ENCODE measurements at regions of chr5 and their contacts with region 1.

Region 1: GRCh38 chr5:39217365-39218281 is 1.7 kb downstream of the FYB1 start:
- DNase-seq: peak; percentile 73
- H3K4me3 Mint-ChIP-seq: peak overlapping the region; percentile 46
- H3K27ac Mint-ChIP-seq: peak overlapping the region; percentile 11
- H3K4me1 Mint-ChIP-seq: peaks cover 37% of the 10 kb centered on the region
- H3K27me3 Mint-ChIP-seq: no peaks in the 10 kb centered on the region
- CTCF ChIP-seq: peak; percentile 94

Region 2: GRCh38 chr5:39063037-39063436 is 154.6 kb before region 1 on chr5:
- CTCF ChIA-PET with region 1: no interaction called
- intact Hi-C with region 1: no loop called
- DNase-seq: no peak
- H3K4me3 Mint-ChIP-seq: no peak overlapping the region
- H3K27ac Mint-ChIP-seq: no peak overlapping the region
- H3K4me1 Mint-ChIP-seq: no peaks in the 10 kb centered on the region
- H3K27me3 Mint-ChIP-seq: no peaks in the 10 kb centered on the region
- CTCF ChIP-seq: no peak

Region 3: DNA sequence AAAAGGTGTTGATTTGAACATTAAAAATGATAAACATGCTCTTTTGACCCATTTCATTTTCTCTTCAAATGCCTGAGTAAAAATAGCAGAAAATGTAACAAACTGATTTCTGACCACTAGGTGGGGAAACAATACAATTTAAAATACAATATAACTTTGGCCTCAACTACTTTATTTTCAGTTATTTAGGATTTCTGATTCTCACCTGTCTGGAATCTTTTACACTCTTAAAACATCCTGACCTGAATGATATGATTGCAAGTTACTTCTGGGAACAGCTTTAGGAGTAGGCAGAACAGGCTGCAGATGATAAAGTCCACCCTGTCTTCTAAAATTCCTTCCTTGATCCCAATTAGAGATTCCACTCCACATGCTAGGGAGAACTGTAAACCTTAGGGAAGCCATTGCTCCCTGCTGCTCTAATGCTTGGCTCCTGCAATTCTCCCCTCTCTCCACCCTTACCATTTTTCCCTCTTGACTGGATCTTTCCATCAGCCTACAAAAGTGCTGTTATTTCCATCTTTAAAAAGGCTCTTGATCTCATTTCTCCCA is 68.6 kb before region 1 on chr5:
- CTCF ChIA-PET with region 1: no interaction called
- intact Hi-C with region 1: loop called (anchors 1 kb)
- DNase-seq: no peak
- H3K4me3 Mint-ChIP-seq: no peak overlapping the region
- H3K27ac Mint-ChIP-seq: peak overlapping the region; percentile 76
- H3K4me1 Mint-ChIP-seq: peaks cover 12% of the 10 kb centered on the region
- H3K27me3 Mint-ChIP-seq: no peaks in the 10 kb centered on the region
- CTCF ChIP-seq: no peak

Region 4: GRCh38 chr5:39249564-39250274 is 32.1 kb after region 1 on chr5:
- CTCF ChIA-PET with region 1: no interaction called
- intact Hi-C with region 1: no loop called
- DNase-seq: no peak
- H3K4me3 Mint-ChIP-seq: no peak overlapping the region
- H3K27ac Mint-ChIP-seq: no peak overlapping the region
- H3K4me1 Mint-ChIP-seq: peaks cover 5% of the 10 kb centered on the region
- H3K27me3 Mint-ChIP-seq: no peaks in the 10 kb centered on the region
- CTCF ChIP-seq: no peak

Region 5: GRCh38 chr5:39274398-39275085 is 56.9 kb after region 1 on chr5:
- CTCF ChIA-PET with region 1: interaction called, 4 read pairs
- intact Hi-C with region 1: loop called (anchors 2 kb)
- DNase-seq: no peak
- H3K4me3 Mint-ChIP-seq: no peak overlapping the region
- H3K27ac Mint-ChIP-seq: peak overlapping the region; percentile 70
- H3K4me1 Mint-ChIP-seq: peaks cover 16% of the 10 kb centered on the region
- H3K27me3 Mint-ChIP-seq: no peaks in the 10 kb centered on the region
- CTCF ChIP-seq: no peak

Region 6: GRCh38 chr5:39370555-39371366 is 153.1 kb after region 1 on chr5:
- CTCF ChIA-PET with region 1: interaction called, 11 read pairs
- intact Hi-C with region 1: loop called (anchors 5 kb)
- DNase-seq: no peak
- H3K4me3 Mint-ChIP-seq: no peak overlapping the region
- H3K27ac Mint-ChIP-seq: no peak overlapping the region
- H3K4me1 Mint-ChIP-seq: peaks cover 41% of the 10 kb centered on the region
- H3K27me3 Mint-ChIP-seq: no peaks in the 10 kb centered on the region
- CTCF ChIP-seq: no peak

Region 7: DNA sequence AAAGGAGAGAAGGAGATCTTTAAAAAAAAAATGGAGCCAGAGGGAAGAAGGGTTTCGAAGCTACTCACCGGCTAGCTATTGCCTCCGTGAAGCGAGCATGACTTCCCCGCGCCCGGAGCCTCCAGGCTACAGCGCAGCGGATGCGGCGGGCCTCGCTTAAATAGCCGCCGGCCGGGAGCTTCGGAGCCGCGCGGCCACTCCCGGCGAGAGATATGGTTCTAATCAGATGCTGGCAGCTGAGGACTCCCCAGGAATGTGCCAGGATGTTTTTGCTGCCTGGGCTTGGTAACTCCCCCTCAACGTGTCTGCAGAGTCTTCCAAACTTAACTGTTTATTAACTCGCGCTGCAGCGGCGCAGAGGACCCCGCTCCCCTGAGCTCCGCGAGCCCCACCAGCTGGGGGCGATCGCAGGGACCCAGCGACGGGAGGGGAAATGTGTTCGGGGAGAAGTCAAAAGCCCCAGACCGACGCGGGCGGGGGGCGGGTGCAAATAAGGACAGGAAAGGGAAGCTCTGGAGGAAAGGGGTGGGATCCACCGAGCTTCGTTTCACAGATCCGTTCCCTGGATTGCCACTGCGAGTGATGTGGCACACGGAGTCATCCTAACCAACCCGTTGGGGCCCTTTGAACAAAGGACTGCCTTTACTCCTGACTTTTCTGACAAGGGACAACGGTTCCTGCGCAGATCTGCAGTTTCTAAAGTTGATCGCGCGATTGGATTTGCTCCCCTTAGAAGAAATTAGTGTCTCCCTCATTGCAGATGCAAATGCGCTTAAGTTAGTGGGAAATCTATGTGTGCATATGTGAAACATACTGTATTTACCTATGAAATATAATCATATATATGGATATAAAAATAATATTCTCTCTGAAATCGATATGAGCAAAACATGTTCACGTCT is 207.4 kb after region 1 on chr5 and contains the start of gene DAB2:
- CTCF ChIA-PET with region 1: no interaction called
- intact Hi-C with region 1: loop called (anchors 10 kb)
- DNase-seq: peak; percentile 81
- H3K4me3 Mint-ChIP-seq: peak within 1 kb of the TSS; percentile 89
- H3K27ac Mint-ChIP-seq: peak within 1 kb of the TSS; percentile 53
- H3K4me1 Mint-ChIP-seq: peaks cover 36% of the 10 kb centered on the region
- H3K27me3 Mint-ChIP-seq: no peaks in the 10 kb centered on the region
- CTCF ChIP-seq: peak; percentile 70
- total RNA-seq, gene DAB2: 9.5 and 12.4 TPM in 2 replicates

Region 8: DNA sequence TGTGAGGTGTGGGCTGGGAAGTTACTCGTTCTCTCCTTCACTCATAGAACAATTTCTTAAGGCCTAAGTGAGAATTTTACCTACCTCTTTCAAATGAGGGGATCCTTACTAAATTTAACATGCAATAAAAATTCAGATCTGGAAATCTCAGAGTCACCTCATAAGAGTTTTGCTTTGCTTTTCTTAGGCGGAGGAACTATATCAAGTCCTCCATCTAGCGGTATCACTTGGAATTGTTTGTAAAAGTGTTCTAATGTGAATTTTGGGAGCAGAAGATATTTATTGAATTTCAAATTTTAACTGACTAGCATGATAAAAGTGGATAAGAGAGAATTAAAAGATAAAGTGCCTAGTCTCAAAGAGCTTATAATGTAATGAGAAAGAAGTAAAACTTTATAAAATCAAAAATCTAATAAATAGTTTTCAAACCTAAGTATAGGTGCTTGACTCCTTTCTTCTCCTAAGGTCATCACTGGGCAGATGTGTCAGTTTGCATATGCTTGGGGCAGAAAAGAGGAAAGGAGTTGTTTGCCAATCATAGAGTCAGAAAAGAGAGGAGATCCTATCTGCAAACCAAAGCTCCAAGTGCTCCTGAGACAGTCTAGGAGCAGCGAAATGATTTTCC is 352.9 kb after region 1 on chr5:
- CTCF ChIA-PET with region 1: no interaction called
- intact Hi-C with region 1: loop called (anchors 5 kb)
- DNase-seq: peak; percentile 10
- H3K4me3 Mint-ChIP-seq: no peak overlapping the region
- H3K27ac Mint-ChIP-seq: no peak overlapping the region
- H3K4me1 Mint-ChIP-seq: no peaks in the 10 kb centered on the region
- H3K27me3 Mint-ChIP-seq: no peaks in the 10 kb centered on the region
- CTCF ChIP-seq: peak; percentile 16

Measured in Calu3 (cell line).